Activated naive CD4-positive, alpha-beta T cell treated with anti-CD3 and anti-CD28 coated beads for 36 hours (primary cell): ENCODE measurements at regions of chr18 and their contacts with region 1.

Region 1: DNA sequence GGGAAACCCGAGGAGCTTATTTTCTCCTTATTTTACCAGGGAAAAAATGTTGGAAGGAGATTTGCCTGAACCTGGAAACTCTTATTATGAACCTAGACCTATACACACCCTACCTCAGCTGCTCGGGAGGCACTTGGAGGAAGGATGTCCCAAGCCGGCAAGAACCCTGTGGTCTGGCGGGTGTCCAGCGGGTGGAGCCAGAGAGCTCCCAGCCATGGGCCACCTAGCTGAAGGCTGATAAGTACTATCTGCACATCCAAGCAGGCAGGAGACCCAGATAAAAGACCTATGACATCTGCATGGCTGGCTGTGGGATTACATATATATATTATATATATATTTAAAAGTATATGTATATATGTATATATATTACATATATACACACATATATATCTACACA is 1.1 kb upstream of the SLC14A1 start:
- DNase-seq: peak; percentile 87
- H3K4me3 Mint-ChIP-seq: no peak overlapping the region
- H3K27ac Mint-ChIP-seq: no peak overlapping the region
- H3K4me1 Mint-ChIP-seq: no peaks in the 10 kb centered on the region
- H3K27me3 Mint-ChIP-seq: peaks cover 5% of the 10 kb centered on the region

Region 2: GRCh38 chr18:45839414-45840395 is 116.8 kb after region 1 on chr18:
- CTCF ChIA-PET with region 1: interaction called, 4 read pairs
- intact Hi-C with region 1: loop called (anchors 1 kb)
- DNase-seq: peak; percentile 49
- H3K4me3 Mint-ChIP-seq: no peak overlapping the region
- H3K27ac Mint-ChIP-seq: no peak overlapping the region
- H3K4me1 Mint-ChIP-seq: peaks cover 11% of the 10 kb centered on the region
- H3K27me3 Mint-ChIP-seq: peaks cover 28% of the 10 kb centered on the region

Region 3: GRCh38 chr18:45910405-45911023 is 187.6 kb after region 1 on chr18:
- CTCF ChIA-PET with region 1: interaction called, 4 read pairs
- intact Hi-C with region 1: loop called (anchors 10 kb)
- DNase-seq: peak; percentile 76
- H3K4me3 Mint-ChIP-seq: no peak overlapping the region
- H3K27ac Mint-ChIP-seq: no peak overlapping the region
- H3K4me1 Mint-ChIP-seq: no peaks in the 10 kb centered on the region
- H3K27me3 Mint-ChIP-seq: no peaks in the 10 kb centered on the region

Region 4: GRCh38 chr18:46281185-46282176 is 558.6 kb after region 1 on chr18:
- CTCF ChIA-PET with region 1: no interaction called
- intact Hi-C with region 1: no loop called
- DNase-seq: peak; percentile 78
- H3K4me3 Mint-ChIP-seq: no peak overlapping the region
- H3K27ac Mint-ChIP-seq: no peak overlapping the region
- H3K4me1 Mint-ChIP-seq: peaks cover 5% of the 10 kb centered on the region
- H3K27me3 Mint-ChIP-seq: no peaks in the 10 kb centered on the region

Region 5: GRCh38 chr18:46518438-46518837 is 795.5 kb after region 1 on chr18:
- CTCF ChIA-PET with region 1: no interaction called
- intact Hi-C with region 1: no loop called
- DNase-seq: no peak
- H3K4me3 Mint-ChIP-seq: no peak overlapping the region
- H3K27ac Mint-ChIP-seq: no peak overlapping the region
- H3K4me1 Mint-ChIP-seq: no peaks in the 10 kb centered on the region
- H3K27me3 Mint-ChIP-seq: peaks cover 3% of the 10 kb centered on the region